ENCODE measurements at regions of chr11 and their contacts with region 1.

Region 1: GRCh38 chr11:82900277-82901164 is at the start of gene PRCP:
- DNase-seq: peak; percentile 88 to 92 (median 89)
- H3K4me3 ChIP-seq: peak within 1 kb of the TSS; percentile 85
- H3K27ac ChIP-seq: peak within 1 kb of the TSS; percentile 80 to 90
- H3K4me1 ChIP-seq: no peaks in the 10 kb centered on the region
- H3K27me3 ChIP-seq: no peaks in the 10 kb centered on the region
- CTCF ChIP-seq: no peak
- EP300 ChIP-seq: no peak
- POLR2A ChIP-seq: peak; percentile 64
- total RNA-seq, gene PRCP: 36.4 to 69.0 (median 62.8) TPM

Region 2: GRCh38 chr11:82458761-82459160 is 441.8 kb before region 1 on chr11:
- intact Hi-C with region 1: no loop called
- DNase-seq: no peak
- H3K4me3 ChIP-seq: no peak overlapping the region
- H3K27ac ChIP-seq: no peak overlapping the region
- H3K4me1 ChIP-seq: no peaks in the 10 kb centered on the region
- H3K27me3 ChIP-seq: no peaks in the 10 kb centered on the region
- CTCF ChIP-seq: no peak
- EP300 ChIP-seq: no peak
- POLR2A ChIP-seq: no peak

Region 3: DNA sequence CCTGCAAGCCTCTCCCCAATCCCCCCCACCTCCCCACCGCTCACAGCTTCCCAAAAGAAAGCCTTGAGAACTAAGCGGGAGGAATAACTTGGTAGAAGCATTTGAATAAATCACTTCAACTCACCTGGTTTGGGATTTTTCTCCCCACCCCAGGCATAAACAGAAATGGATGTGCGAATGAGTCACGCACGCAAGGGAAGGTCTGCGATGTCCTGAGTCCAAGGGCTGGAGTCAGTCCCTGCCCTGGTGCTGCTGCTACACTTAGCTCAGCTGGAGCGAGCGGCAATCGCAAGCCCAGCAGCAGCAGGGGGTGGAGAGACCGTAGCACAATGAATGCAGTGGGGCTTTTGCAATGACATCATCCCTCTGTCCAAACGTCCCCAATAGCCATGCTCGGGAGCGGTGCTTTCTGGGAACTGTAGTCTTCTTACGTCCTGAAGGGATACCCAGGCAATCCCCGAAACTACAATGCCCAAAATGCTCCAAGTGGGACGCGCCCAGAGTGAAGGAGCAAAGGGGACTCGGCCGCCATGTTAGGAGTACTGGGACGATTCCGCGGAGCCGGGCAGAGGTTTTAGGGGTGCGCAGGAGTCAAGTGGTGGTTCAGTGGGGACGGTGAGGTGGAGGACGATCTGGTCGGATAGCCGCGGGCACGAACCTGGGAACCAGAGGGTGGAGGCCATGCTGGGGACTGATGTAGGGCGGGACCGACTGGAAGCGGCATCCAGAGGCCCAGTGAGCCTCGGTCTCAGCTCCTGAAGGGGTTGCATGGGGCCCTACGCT is 171.2 kb after region 1 on chr11 and contains the start of gene RAB30:
- intact Hi-C with region 1: loop called in 1 of 4 experiments (anchors 2 kb)
- DNase-seq: peak; percentile 92 to 98 (median 95)
- H3K4me3 ChIP-seq: peak within 1 kb of the TSS; percentile 57
- H3K27ac ChIP-seq: peak within 1 kb of the TSS; percentile 80 to 90
- H3K4me1 ChIP-seq: peaks cover 10% of the 10 kb centered on the region
- H3K27me3 ChIP-seq: no peaks in the 10 kb centered on the region
- CTCF ChIP-seq: peak in 1 of 3 donors; percentile 17
- EP300 ChIP-seq: peak; percentile 30
- POLR2A ChIP-seq: peak; percentile 98
- total RNA-seq, gene RAB30: 9.0 to 30.4 (median 22.7) TPM

Region 4: DNA sequence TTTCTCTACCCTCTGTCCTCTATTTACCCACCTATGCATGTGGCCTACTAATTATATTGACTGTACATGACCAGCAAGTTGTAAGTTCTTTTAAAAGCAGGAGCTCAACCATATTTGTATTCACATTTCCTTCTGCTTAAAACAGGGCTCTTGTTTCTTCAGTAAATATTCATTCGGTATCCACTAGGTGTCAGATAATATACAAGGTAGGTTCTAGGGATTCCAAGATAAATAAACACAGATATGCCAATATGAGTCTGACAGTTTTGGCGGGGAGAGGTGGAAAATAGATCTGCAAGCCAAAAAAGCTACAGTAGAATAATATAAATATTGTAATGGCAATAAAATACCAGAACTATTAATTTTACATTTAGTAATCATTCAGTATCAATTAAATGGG is 186.5 kb after region 1 on chr11:
- intact Hi-C with region 1: loop called in 1 of 4 experiments (anchors 10 kb)
- DNase-seq: no peak
- H3K4me3 ChIP-seq: no peak overlapping the region
- H3K27ac ChIP-seq: no peak overlapping the region
- H3K4me1 ChIP-seq: peaks cover 5% of the 10 kb centered on the region
- H3K27me3 ChIP-seq: no peaks in the 10 kb centered on the region
- CTCF ChIP-seq: no peak
- EP300 ChIP-seq: no peak
- POLR2A ChIP-seq: no peak

Region 5: GRCh38 chr11:83193315-83194280 is 293.1 kb after region 1 on chr11 and contains the start of gene ANKRD42:
- intact Hi-C with region 1: loop called in 2 of 4 experiments (anchors 5 kb)
- DNase-seq: peak; percentile 90 to 93 (median 92)
- H3K4me3 ChIP-seq: peak within 1 kb of the TSS; percentile 94
- H3K27ac ChIP-seq: peak within 1 kb of the TSS; percentile 70 to 75
- H3K4me1 ChIP-seq: peaks cover 4% of the 10 kb centered on the region
- H3K27me3 ChIP-seq: no peaks in the 10 kb centered on the region
- CTCF ChIP-seq: no peak
- EP300 ChIP-seq: peak; percentile 32
- POLR2A ChIP-seq: peak; percentile 88
- total RNA-seq, gene ANKRD42: 12.4 to 21.7 (median 14.0) TPM

Region 6: DNA sequence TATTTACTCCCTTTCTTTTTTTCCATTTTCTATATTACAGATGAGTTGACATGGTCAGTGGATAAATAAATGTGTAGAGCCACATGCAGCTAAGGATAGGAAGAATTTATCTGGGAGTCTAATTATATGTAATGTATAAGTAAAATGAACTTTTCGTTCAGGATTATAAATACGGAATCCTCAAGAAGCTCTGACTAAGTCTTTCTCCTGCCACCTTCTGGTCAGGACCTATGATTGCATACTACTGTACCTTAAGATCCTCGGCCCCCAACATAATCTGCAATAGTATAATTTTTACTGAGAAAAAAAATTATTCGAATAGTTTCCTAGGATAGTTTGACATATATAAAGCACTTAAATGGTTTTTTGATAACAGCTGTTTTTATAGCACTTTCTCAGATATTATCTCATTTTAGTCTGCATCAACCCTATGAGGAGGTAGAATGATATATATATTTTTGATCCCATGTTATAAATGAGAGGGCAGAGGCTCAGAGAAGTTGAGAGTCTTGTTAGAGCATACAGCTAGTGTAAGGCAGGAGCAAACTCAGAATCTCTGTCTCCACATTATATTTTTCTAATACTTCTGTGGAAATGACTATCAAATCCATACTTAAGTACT is 349.6 kb after region 1 on chr11:
- intact Hi-C with region 1: loop called in 2 of 4 experiments (anchors 5 to 10 kb)
- DNase-seq: no peak
- H3K4me3 ChIP-seq: no peak overlapping the region
- H3K27ac ChIP-seq: no peak overlapping the region
- H3K4me1 ChIP-seq: no peaks in the 10 kb centered on the region
- H3K27me3 ChIP-seq: no peaks in the 10 kb centered on the region
- CTCF ChIP-seq: peak in 2 of 3 donors; percentile 37 to 50
- EP300 ChIP-seq: no peak
- POLR2A ChIP-seq: no peak

Region 7: DNA sequence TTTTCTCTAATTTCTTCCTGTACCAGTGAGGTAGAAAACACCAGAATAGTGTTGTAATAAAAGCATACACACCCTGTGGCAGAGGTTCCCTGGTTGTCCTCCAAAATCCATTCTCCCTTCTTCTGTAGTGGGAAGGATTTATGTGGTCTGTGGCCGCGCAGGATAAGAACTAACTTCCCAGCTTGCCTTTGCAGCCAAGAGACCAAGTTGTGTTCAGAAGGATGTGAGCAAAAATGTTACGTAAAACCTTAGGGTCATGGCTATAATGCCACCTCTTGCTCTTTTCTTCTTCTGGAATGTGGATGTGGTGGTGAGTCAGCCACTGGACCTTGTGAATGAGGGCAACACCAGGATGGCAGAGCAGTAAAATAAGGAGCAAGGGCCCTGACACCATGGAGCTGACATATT is 357.2 kb after region 1 on chr11:
- intact Hi-C with region 1: loop called in 2 of 4 experiments (anchors 5 to 10 kb)
- DNase-seq: peak in 2 of 5 donors; percentile 15 to 27
- H3K4me3 ChIP-seq: no peak overlapping the region
- H3K27ac ChIP-seq: peak overlapping the region in 1 of 2 donors; percentile 7
- H3K4me1 ChIP-seq: no peaks in the 10 kb centered on the region
- H3K27me3 ChIP-seq: no peaks in the 10 kb centered on the region
- CTCF ChIP-seq: no peak
- EP300 ChIP-seq: no peak
- POLR2A ChIP-seq: no peak

Region 8: GRCh38 chr11:83819933-83820549 is 919.5 kb after region 1 on chr11:
- intact Hi-C with region 1: loop called in 1 of 4 experiments (anchors 10 kb)
- DNase-seq: no peak
- H3K4me3 ChIP-seq: no peak overlapping the region
- H3K27ac ChIP-seq: no peak overlapping the region
- H3K4me1 ChIP-seq: no peaks in the 10 kb centered on the region
- H3K27me3 ChIP-seq: no peaks in the 10 kb centered on the region
- CTCF ChIP-seq: peak; percentile 33 to 58 (median 47)
- EP300 ChIP-seq: no peak
- POLR2A ChIP-seq: no peak

Measured in ovary (tissue), 10 donors.